Posterior vena cava (tissue), 2 donors: ENCODE measurements at regions of chr14 and their contacts with region 1.

Region 1: GRCh38 chr14:24734878-24735500 is 101.0 kb upstream of the GZMB start:
- DNase-seq: no peak

Region 2: DNA sequence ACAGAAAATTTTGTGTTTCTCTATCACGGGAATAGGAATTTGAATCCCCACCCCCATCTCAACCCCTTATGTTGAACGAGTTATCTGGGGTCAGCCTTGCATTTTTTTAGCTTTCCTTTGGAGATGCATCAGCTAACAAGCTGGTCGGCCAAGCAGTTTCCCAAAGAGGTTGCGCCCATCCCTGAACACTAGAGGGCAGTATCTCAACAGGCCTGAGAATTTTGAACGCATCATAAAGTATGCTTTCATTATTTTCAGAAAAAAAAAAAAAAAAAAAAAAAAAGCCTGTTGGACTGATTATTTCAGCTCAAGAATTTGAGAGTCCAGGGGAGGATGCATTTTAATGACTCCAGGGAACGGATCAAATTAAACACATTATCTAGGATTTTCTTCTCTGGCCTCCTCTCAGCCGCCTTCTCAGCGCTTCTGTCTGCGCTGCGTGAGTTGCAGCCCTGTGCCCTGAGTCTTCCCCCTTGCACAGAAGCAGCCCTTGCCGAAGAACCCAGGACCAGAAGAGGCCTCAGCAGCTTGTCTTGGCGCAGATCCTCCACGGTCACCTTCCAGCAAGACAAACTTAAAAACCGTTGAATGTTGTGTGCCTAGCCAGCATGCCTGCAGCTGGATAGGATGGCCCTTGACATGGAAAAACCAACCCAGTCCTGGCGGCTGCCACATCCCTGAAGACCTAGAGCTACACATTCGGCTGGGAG is 24.4 kb before region 1 on chr14:
- intact Hi-C with region 1: no loop called
- DNase-seq: no peak

Region 3: DNA sequence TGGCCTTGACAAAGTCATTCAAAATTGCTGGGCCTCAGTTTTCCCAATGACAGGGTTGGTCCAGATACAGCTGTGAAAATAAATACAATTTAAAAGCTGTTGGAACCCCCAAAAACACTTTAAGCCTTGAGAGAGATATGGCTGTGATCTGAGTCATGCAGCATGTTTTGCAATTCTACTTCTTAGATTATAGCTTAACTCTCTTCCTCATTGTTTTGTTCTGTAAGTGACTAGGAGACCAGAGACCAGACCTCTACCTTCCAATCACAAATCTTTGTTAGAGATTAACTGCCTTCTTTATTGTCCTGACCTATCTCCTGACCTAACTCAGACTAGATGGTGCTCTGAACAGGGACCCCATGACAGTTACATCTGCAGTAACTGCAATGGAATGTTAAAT is 116.8 kb after region 1 on chr14:
- intact Hi-C with region 1: no loop called
- DNase-seq: no peak

Region 4: DNA sequence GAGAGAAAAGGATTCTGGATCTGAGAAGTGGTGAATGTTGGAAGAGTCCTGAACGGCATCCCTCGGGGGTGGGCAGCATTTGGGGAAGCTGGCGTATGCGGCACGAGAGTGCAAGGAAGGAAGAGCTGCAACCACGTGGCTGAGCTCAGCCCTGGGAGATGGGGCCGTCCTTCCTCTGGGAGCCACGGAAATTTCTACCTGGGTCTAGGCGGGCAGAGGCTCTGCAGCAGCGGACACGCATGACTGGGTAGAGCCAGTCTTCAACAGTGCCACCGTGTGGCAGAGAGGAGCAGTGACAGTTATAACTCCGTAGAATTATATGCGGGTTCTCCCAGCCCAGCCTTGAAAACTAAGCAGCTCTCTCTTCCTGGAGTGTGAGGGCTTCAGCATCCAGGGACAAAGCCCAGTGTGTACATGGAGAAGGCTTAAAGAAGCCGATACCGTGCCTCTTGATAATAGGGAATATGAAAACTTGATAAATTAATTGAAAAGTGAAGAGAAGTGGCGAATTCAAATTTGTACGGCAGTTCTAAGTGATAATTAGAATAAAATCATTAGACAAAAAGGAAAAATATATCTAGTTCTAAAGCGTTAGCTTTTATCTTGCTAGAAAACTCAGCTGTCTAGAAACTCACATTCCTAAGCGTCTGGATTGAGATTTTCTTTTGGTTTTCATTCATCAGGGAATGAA is 397.9 kb after region 1 on chr14:
- intact Hi-C with region 1: loop called in 1 of 2 experiments (anchors 10 kb)
- DNase-seq: peak; percentile 87